Panc1 (cell line): ENCODE measurements at regions of chr7 and their contacts with region 1.

Region 1: DNA sequence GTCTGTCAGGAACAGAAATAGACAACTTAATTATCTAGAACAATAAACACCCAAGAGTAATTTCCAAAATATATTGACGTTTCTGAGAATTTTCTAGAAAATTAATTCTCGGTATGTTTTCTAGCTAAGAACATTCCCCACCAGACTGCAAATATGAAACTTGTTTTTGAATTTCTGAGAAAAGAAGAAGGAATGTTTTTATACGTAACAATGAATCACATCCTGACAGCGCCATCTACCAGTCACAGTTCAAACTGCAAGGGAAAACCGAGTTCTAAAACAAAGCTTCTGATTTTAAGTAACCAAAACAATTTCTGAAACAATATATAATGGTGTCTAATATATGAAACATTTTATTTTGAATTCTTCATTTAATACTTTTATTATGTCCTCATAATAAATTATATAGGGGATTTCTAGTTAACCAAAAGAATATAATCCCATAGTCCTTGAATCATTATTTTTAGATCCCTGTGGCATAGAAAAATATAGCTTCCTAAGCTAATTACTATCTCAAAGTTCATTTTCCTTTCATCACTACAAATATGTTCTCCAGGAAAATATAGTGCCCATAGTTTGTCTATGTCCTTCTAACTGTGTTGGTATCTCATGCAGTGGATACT is 34.5 kb upstream of the MEOX2 start:
- DNase-seq: peak; percentile 2
- ATAC-seq: no peak
- H3K4me3 ChIP-seq: no peak overlapping the region
- H3K27ac ChIP-seq: no peak overlapping the region
- H3K4me1 ChIP-seq: no peaks in the 10 kb centered on the region
- H3K27me3 ChIP-seq: no peaks in the 10 kb centered on the region
- CTCF ChIP-seq: peak; percentile 73; the same call in 1 of the 2 replicates

Region 2: GRCh38 chr7:15305002-15305600 is 415.9 kb before region 1 on chr7:
- CTCF ChIA-PET with region 1: no interaction called
- POLR2A ChIA-PET with region 1: no interaction called
- in situ Hi-C with region 1: no loop called
- intact Hi-C with region 1: loop called (anchors 5 kb)
- DNase-seq: peak; percentile 12
- ATAC-seq: no peak
- H3K4me3 ChIP-seq: no peak overlapping the region
- H3K27ac ChIP-seq: no peak overlapping the region
- H3K4me1 ChIP-seq: no peaks in the 10 kb centered on the region
- H3K27me3 ChIP-seq: no peaks in the 10 kb centered on the region
- CTCF ChIP-seq: peak; percentile 78; the same call in 1 of the 2 replicates

Region 3: GRCh38 chr7:15326044-15326644 is 394.8 kb before region 1 on chr7:
- CTCF ChIA-PET with region 1: no interaction called
- POLR2A ChIA-PET with region 1: no interaction called
- in situ Hi-C with region 1: no loop called
- intact Hi-C with region 1: loop called (anchors 5 kb)
- DNase-seq: peak; percentile 25
- ATAC-seq: no peak
- H3K4me3 ChIP-seq: no peak overlapping the region
- H3K27ac ChIP-seq: no peak overlapping the region
- H3K4me1 ChIP-seq: no peaks in the 10 kb centered on the region
- H3K27me3 ChIP-seq: no peaks in the 10 kb centered on the region
- CTCF ChIP-seq: peak; percentile 67; the same call in 1 of the 2 replicates

Region 4: DNA sequence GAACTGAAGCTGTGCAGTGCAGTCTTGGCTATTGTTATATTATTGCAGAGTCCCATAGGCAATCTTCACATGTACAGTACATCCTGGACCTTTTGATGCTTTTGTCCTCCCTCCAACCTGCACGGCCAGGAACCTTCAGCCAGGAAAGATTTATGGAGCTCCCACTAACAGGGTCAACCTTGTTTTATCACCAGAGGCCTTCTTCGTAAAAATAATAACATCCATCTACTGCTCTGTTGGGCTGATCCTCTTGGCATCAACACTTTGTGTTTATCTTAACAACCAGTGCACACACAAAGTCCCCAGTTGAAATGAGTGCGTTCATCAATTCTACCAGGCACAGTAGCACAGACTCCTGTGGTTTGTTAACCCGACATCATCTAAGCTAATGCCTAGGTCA is 231.6 kb before region 1 on chr7:
- CTCF ChIA-PET with region 1: no interaction called
- POLR2A ChIA-PET with region 1: no interaction called
- in situ Hi-C with region 1: no loop called
- intact Hi-C with region 1: no loop called
- DNase-seq: no peak
- ATAC-seq: no peak
- H3K4me3 ChIP-seq: no peak overlapping the region
- H3K27ac ChIP-seq: no peak overlapping the region
- H3K4me1 ChIP-seq: no peaks in the 10 kb centered on the region
- H3K27me3 ChIP-seq: no peaks in the 10 kb centered on the region
- CTCF ChIP-seq: no peak